CD4-positive, alpha-beta memory T cell (primary cell): ENCODE measurements at regions of chr16 and their contacts with region 1.

Region 1: GRCh38 chr16:71808593-71809459 is at the start of gene AP1G1:
- DNase-seq: peak; percentile 94 to 98 (median 97)
- H3K4me3 ChIP-seq: peak within 1 kb of the TSS; percentile 98 to 99
- H3K4me3 Mint-ChIP-seq: peak within 1 kb of the TSS; percentile 92 to 99 (median 98)
- H3K27ac ChIP-seq: peak within 1 kb of the TSS; percentile 100
- H3K27ac Mint-ChIP-seq: peak within 1 kb of the TSS; percentile 96 to 100 (median 100)
- H3K4me1 ChIP-seq: peaks cover 39% of the 10 kb centered on the region
- H3K4me1 Mint-ChIP-seq: peaks cover 19 to 55% (median 37%) of the 10 kb centered on the region in 4 donors
- H3K27me3 ChIP-seq: no peaks in the 10 kb centered on the region
- H3K27me3 Mint-ChIP-seq: peaks cover 0 to 2% of the 10 kb centered on the region in 2 donors
- total RNA-seq, gene AP1G1: 101 to 103 TPM

Region 2: GRCh38 chr16:71501547-71501946 is 307.3 kb before region 1 on chr16:
- CTCF ChIA-PET with region 1: no interaction called
- POLR2A ChIA-PET with region 1: no interaction called
- intact Hi-C with region 1: no loop called
- DNase-seq: no peak
- H3K4me3 ChIP-seq: no peak overlapping the region
- H3K4me3 Mint-ChIP-seq: no peak overlapping the region
- H3K27ac ChIP-seq: no peak overlapping the region
- H3K27ac Mint-ChIP-seq: no peak overlapping the region
- H3K4me1 ChIP-seq: no peaks in the 10 kb centered on the region
- H3K4me1 Mint-ChIP-seq: no peaks in the 10 kb centered on the region
- H3K27me3 ChIP-seq: no peaks in the 10 kb centered on the region
- H3K27me3 Mint-ChIP-seq: peaks cover 8 to 11% of the 10 kb centered on the region in 2 donors

Region 3: DNA sequence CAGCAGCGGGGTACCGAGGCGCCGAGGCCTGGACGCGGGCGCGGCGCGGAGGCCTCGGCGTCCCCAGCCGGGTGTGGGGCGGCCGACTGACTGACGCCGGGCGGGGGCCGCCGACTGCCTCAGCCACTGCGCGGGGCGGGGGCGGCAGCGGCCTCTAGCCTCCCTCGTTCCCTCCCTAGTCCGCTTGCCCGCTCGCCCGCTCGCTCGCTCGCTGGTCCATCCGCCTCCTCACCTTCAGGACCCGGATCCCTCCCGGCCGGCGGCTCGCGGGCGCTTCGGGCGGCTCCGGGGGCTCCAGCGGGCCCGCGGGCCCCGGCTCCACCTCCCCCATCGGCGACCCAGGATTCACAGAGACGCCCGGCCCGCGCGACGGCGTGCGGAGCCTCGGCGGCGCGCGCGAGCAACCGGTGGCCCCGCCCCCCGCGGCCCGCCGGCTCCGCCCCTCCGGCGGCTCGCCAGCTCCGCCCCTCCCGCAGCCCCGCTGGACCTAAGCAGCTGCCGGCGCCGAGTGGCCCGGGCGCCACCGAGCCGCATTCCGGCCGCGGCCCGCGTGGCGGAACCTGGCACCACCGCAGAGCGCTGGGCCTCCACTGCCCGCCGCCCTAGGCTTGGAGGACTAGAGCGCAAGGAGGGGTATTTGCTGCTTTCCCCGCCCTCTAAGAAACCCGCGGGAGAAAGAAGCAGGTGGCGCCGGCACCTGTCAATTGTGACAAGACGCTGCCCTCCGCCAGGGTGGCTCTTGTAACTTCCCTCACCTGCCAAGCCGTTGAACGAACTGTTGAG is 85.1 kb before region 1 on chr16:
- CTCF ChIA-PET with region 1: no interaction called
- POLR2A ChIA-PET with region 1: interaction called, 10 read pairs
- intact Hi-C with region 1: loop called (anchors 2 kb)
- DNase-seq: peak; percentile 87 to 91 (median 88)
- H3K4me3 ChIP-seq: peak overlapping the region; percentile 45 to 54
- H3K4me3 Mint-ChIP-seq: peak overlapping the region; percentile 81 to 90 (median 88)
- H3K27ac ChIP-seq: peak overlapping the region; percentile 83
- H3K27ac Mint-ChIP-seq: peak overlapping the region; percentile 76 to 96 (median 89)
- H3K4me1 ChIP-seq: peaks cover 14% of the 10 kb centered on the region
- H3K4me1 Mint-ChIP-seq: peaks cover 7 to 20% (median 12%) of the 10 kb centered on the region in 4 donors
- H3K27me3 ChIP-seq: no peaks in the 10 kb centered on the region
- H3K27me3 Mint-ChIP-seq: peaks cover 0 to 1% of the 10 kb centered on the region in 2 donors

Region 4: DNA sequence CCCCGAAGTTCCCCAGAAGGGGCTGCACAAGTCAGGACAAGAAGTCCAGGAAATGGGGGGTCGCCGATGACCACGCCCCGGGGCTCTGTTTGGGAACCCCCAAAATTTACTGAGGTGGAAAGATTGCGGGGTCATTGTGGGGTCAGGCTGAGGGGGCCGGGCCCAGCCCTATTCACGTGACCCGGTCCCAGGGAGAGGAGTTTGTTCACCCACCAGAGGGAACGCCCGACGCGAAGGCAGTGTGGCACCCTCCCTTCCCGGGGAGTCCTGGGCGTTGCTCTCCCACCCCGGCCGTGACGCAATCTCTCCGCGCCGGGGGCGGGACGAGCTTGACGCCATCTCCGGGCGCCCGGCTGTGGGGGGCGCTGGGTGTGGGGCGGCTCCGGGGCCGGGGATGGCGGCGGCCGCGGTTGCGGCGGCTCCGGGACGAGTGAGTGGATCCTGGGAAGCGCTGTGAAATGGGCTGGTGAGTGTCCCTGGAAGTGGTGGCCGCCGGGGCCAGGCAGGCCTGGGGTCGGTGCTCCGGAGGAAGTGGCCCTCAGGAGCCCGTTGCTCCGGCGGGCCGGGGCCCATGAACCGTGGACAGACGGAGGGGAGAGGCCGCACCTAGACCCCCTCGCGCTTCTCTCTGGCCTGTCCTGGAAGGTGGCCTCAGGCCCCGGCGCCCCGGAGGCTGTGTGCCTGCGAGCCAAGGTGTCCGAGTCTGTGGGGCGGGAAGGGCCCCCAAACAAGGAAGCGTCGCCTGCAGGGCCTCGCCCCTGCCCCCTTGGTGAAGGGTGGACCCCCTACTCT is 37.0 kb after region 1 on chr16 and contains the start of gene ATXN1L:
- CTCF ChIA-PET with region 1: no interaction called
- POLR2A ChIA-PET with region 1: interaction called, 14 read pairs
- intact Hi-C with region 1: loop called (anchors 1 kb)
- DNase-seq: peak; percentile 90 to 98 (median 94)
- H3K4me3 ChIP-seq: peak within 1 kb of the TSS; percentile 84 to 89
- H3K4me3 Mint-ChIP-seq: peak within 1 kb of the TSS; percentile 90 to 95 (median 94)
- H3K27ac ChIP-seq: peak within 1 kb of the TSS; percentile 88
- H3K27ac Mint-ChIP-seq: peak within 1 kb of the TSS; percentile 97 to 99 (median 98)
- H3K4me1 ChIP-seq: peaks cover 18% of the 10 kb centered on the region
- H3K4me1 Mint-ChIP-seq: peaks cover 26 to 54% (median 38%) of the 10 kb centered on the region in 4 donors
- H3K27me3 ChIP-seq: no peaks in the 10 kb centered on the region
- H3K27me3 Mint-ChIP-seq: no peaks in the 10 kb centered on the region
- total RNA-seq, gene ATXN1L: 29.6 to 31.6 TPM

Region 5: DNA sequence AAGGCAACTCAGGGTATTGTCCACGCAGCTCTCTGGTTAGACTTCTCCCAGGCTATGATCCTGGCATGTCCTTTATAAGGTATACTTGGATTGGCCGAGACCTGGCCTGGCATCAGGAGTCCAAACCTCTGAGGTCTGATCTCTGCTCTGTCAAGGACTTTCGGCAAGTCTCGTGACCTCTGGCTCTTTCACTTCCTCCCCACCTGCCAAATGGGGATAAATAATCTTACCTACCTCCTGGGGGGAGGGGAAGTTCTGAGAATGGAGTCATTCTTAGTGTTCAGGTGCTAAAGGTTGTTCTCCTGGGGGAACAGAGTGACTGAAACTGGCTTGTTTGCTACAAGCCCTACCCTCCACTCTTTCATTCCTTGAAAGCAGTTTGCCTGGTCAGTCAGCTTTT is 44.6 kb after region 1 on chr16:
- CTCF ChIA-PET with region 1: no interaction called
- POLR2A ChIA-PET with region 1: interaction called, 11 read pairs
- intact Hi-C with region 1: no loop called
- DNase-seq: no peak
- H3K4me3 ChIP-seq: no peak overlapping the region
- H3K4me3 Mint-ChIP-seq: no peak overlapping the region
- H3K27ac ChIP-seq: no peak overlapping the region
- H3K27ac Mint-ChIP-seq: peak overlapping the region in 6 of 7 donors; percentile 15 to 74 (median 66)
- H3K4me1 ChIP-seq: peaks cover 51% of the 10 kb centered on the region
- H3K4me1 Mint-ChIP-seq: peaks cover 39 to 77% (median 54%) of the 10 kb centered on the region in 4 donors
- H3K27me3 ChIP-seq: no peaks in the 10 kb centered on the region
- H3K27me3 Mint-ChIP-seq: no peaks in the 10 kb centered on the region

Region 6: GRCh38 chr16:71894921-71895678 is 86.3 kb after region 1 on chr16 and contains the start of gene IST1:
- CTCF ChIA-PET with region 1: interaction called, 4 read pairs
- POLR2A ChIA-PET with region 1: interaction called, 92 read pairs
- intact Hi-C with region 1: loop called (anchors 1 kb)
- DNase-seq: peak; percentile 97 to 98 (median 97)
- H3K4me3 ChIP-seq: peak within 1 kb of the TSS; percentile 95 to 99
- H3K4me3 Mint-ChIP-seq: peak within 1 kb of the TSS; percentile 93 to 98 (median 96)
- H3K27ac ChIP-seq: peak within 1 kb of the TSS; percentile 90
- H3K27ac Mint-ChIP-seq: peak within 1 kb of the TSS; percentile 96 to 99 (median 98)
- H3K4me1 ChIP-seq: peaks cover 44% of the 10 kb centered on the region
- H3K4me1 Mint-ChIP-seq: peaks cover 10 to 51% (median 25%) of the 10 kb centered on the region in 4 donors
- H3K27me3 ChIP-seq: no peaks in the 10 kb centered on the region
- H3K27me3 Mint-ChIP-seq: no peaks in the 10 kb centered on the region
- total RNA-seq, gene IST1: 282 to 287 TPM

Region 7: DNA sequence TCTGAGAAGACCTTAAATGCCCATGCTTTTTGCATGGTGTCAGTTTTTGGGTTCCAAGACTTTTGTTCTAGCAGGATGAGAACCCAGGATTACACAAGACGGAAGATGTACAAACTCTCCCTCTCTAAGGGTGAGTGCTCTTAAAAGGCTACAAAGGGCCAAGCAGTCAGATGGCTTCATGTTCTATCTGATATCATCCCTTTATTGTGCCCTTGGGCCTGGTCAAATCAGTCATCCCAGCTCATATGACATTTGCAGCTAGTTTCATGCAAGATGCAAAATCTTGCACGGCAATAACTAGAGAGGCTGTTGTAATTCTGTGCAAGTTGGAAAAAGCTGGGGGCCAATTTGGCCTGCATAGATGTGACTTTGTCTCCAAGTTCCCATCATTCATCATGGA is 1297.5 kb after region 1 on chr16:
- CTCF ChIA-PET with region 1: no interaction called
- POLR2A ChIA-PET with region 1: no interaction called
- intact Hi-C with region 1: no loop called
- DNase-seq: no peak
- H3K4me3 ChIP-seq: no peak overlapping the region
- H3K4me3 Mint-ChIP-seq: no peak overlapping the region
- H3K27ac ChIP-seq: no peak overlapping the region
- H3K27ac Mint-ChIP-seq: no peak overlapping the region
- H3K4me1 ChIP-seq: no peaks in the 10 kb centered on the region
- H3K4me1 Mint-ChIP-seq: no peaks in the 10 kb centered on the region
- H3K27me3 ChIP-seq: no peaks in the 10 kb centered on the region
- H3K27me3 Mint-ChIP-seq: peaks cover 0 to 3% of the 10 kb centered on the region in 2 donors